GM13977 (cell line): ENCODE measurements at regions of chr3 and their contacts with region 1.

Region 1: GRCh38 chr3:46368569-46368968 is 2.2 kb upstream of the CCR5 start:
- DNase-seq: peak; percentile 41
- CTCF ChIP-seq: peak; percentile 61

Region 2: DNA sequence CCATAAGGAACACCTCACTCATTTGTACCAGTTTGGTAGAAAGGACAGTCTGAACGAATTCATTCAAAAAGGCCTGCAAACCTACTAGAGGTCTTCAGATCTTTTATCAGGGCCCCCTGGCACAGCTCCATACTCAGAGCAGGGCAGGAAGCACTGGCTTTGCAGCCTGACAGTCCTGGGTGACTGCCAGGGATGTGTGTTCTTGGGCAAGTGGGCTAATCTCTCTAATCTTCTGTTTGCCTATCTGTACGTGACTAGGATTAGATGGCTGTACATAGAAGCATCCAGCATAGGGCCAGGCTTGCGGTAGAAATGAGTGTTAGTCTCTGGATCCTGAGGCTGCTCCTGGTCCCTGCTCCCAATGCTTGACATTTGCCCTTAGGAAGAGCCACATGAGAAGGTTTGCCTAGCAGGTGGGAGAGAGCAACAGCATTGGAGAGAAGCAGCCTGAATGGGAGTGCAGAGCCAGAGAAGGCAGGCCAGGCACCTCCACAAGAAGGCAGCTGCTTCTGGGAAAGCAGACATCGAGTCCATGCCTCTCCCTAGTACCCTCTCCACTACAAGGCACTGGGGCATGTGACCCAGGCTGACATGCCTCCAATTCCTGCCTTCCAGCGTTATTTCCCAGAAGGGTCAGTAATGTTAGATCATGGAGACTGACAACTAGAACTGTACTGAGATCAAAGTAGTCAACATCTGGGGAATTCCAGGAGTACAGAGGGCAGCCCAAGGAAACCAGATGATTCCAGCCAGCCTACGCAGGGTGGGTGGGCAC is 426.3 kb before region 1 on chr3:
- in situ Hi-C with region 1: loop called (anchors 5 kb)
- DNase-seq: no peak
- CTCF ChIP-seq: no peak

Region 3: GRCh38 chr3:46214751-46215352 is 153.7 kb before region 1 on chr3:
- in situ Hi-C with region 1: loop called (anchors 5 kb)
- DNase-seq: peak; percentile 28
- CTCF ChIP-seq: peak; percentile 66

Region 4: GRCh38 chr3:46299608-46300460 is 68.7 kb before region 1 on chr3:
- in situ Hi-C with region 1: loop called (anchors 5 kb)
- DNase-seq: peak; percentile 7
- CTCF ChIP-seq: no peak